HCT116 (cell line): ENCODE measurements at regions of chr7 and their contacts with region 1.

Region 1: DNA sequence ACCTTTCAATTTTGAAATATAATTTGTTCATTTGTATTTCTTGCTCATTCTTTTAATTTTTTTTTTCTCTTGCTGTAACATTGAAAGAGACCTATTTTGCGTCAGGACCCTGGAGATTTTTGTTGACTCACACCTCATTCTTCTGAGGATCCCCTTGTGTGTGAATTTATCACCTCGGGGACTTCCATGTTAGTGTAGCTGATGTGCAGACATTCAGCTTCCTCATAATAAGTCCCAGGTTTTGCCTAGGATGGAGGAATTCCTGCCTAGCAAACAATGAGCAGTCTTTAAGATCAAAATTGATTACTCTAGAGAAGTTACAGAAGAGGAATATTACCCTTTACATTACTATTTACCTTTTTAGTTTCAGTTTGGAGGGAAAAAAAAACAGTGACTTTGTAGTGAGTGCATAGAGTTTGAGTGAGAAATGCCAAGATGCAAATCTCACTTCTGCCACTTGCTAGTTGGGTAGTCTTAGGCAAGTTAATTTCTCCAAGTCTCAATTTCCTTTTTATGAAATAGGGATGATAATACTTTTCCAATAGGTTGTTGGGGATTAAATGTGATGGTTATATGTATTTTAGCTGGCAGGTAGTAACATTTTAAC is 14.3 kb downstream of the TES start:
- DNase-seq: no peak
- ATAC-seq: no peak
- H3K4me3 ChIP-seq: no peak overlapping the region
- H3K27ac ChIP-seq: no peak overlapping the region
- H3K4me1 ChIP-seq: peaks cover 45 to 68% of the 10 kb centered on the region in 2 experiments
- H3K27me3 ChIP-seq: no peaks in the 10 kb centered on the region
- CTCF ChIP-seq: no peak
- POLR2A ChIP-seq: no peak
- RAD21 ChIP-seq: no peak

Region 2: DNA sequence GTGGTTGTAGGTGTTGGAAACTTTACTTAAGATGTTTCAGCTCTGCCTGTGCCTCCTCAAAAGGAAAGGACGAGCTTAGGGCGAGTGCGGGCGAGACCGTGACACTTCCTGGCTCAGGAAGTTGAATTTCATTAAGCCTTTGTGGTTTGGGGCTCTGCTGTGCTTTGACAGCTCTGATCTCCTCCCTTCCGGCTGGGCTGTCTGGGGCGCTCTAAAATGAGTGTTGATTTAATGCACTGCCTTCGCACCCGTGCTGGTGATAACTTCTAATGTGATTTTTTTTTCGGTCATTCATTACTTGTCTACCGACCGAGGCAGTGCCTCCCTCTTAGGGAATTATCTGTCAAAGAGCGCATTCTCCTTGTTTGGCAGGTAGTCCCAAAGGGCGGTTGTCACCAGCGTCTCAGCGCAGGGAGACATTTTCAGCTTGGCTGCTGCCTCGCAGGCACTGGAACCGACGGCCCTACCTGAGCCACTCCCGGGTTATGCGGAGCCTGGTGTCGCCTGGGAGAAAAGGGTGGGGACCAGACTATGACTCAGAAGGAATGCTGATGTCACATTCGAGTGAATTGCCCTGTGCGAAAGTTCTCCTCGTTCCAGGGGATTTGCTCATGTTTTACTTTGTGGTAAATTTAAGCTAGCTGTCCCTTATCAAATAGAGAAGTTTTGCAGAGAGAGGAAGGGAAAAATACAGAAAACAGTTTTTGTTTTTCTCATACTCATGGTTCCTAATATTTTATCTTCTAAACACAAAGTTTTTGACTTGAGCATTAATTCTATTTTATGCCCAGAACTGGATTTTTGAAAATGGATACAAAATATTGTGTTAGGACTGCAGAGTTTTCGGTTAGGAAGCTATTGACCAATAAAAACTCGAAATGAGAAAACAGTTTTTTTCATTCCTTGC is 13.3 kb before region 1 on chr7:
- CTCF ChIA-PET with region 1: interaction called, 3 read pairs
- POLR2A ChIA-PET with region 1: interaction called, 15 read pairs
- RAD21 ChIA-PET with region 1: no interaction called
- intact Hi-C with region 1: no loop called
- DNase-seq: peak; percentile 93
- ATAC-seq: peak; percentile 79
- H3K4me3 ChIP-seq: peak overlapping the region; percentile 76 to 91
- H3K27ac ChIP-seq: peak overlapping the region; percentile 86
- H3K4me1 ChIP-seq: peaks cover 47 to 57% of the 10 kb centered on the region in 2 experiments
- H3K27me3 ChIP-seq: no peaks in the 10 kb centered on the region
- CTCF ChIP-seq: no peak
- POLR2A ChIP-seq: peak; percentile 78
- RAD21 ChIP-seq: no peak

Region 3: GRCh38 chr7:116258734-116259133 is 34.1 kb after region 1 on chr7:
- CTCF ChIA-PET with region 1: no interaction called
- POLR2A ChIA-PET with region 1: no interaction called
- RAD21 ChIA-PET with region 1: no interaction called
- intact Hi-C with region 1: no loop called
- DNase-seq: peak; percentile 48
- ATAC-seq: no peak
- H3K4me3 ChIP-seq: no peak overlapping the region
- H3K27ac ChIP-seq: peak overlapping the region; percentile 74; the same call in 1 of the 2 replicates
- H3K4me1 ChIP-seq: peaks cover 43 to 58% of the 10 kb centered on the region in 2 experiments
- H3K27me3 ChIP-seq: no peaks in the 10 kb centered on the region
- CTCF ChIP-seq: peak; percentile 57 to 91 (median 81)
- POLR2A ChIP-seq: no peak
- RAD21 ChIP-seq: peak; percentile 96